ENCODE measurements at regions of chr11 and their contacts with region 1.

Region 1: DNA sequence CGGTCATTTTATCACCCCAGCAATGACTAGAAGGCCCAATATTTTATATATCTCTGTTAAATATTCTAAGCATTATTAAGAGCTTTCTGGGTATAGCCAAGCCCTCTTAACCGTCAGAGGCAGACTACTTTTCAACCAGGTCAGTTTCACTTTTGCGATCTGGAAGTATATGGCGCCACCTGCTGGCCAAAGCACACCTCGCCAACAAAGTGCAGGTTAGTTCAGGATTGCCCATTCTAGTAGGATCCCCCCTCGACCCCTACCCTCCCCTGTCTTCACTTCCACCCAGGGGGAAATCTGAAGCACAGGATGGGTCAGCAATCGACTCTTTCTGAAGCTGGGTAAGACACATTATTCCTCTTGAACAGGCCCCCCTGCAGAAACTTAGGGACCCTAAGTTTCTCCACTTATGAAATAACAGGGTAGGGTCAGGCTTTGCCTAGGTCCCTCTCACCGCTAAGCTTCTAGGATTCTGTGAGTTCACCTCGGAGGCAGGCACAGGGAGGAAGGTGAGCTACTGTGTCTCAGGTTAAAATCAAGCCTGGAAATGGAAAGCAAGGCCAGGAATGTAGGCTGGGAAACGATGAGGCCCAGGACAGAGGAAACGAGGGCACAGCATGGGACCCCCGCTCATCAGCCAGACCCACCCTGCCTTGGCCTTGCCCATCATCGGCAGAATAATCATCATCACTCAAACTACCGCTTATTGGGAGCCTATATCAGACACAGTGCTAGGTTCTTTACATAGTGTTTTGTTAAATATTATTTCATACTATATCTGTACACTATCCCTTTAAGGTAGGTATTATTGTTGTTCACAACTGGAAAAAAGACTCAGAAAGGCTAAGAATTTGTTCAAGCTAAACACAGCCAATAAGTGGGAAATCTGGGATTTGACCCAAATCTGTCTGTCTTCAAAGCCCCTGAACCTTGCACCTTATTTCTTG is 35.6 kb downstream of the KCNJ1 start:
- DNase-seq: peak; percentile 75
- ATAC-seq: peak; percentile 92
- H3K4me3 Mint-ChIP-seq: peak overlapping the region; percentile 70
- H3K27ac Mint-ChIP-seq: peak overlapping the region; percentile 91
- H3K4me1 Mint-ChIP-seq: peaks cover 80% of the 10 kb centered on the region
- H3K27me3 Mint-ChIP-seq: no peaks in the 10 kb centered on the region
- CTCF ChIP-seq: no peak

Region 2: DNA sequence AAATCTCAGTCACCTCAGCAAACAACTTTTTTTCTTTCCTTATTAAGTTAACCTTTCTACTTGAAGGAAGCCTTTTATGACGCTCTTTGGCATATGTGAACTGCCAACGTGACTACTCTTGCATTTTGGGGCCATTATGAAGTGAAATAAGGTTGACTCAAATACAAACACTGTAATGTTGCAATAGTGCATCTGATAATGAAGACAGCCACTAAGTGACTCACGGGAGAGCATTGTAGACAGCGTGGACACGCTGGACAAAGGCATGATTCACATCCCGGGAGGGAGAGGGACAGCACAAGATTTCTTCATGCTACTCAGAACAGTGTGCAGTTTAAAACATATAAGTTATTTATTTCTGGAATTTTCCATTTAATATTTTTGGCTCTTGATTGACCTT is 804.9 kb before region 1 on chr11:
- CTCF ChIA-PET with region 1: no interaction called
- POLR2A ChIA-PET with region 1: no interaction called
- intact Hi-C with region 1: loop called (anchors 1 kb)
- DNase-seq: no peak
- ATAC-seq: no peak
- H3K4me3 Mint-ChIP-seq: no peak overlapping the region
- H3K27ac Mint-ChIP-seq: no peak overlapping the region
- H3K4me1 Mint-ChIP-seq: no peaks in the 10 kb centered on the region
- H3K27me3 Mint-ChIP-seq: peaks cover 32% of the 10 kb centered on the region
- CTCF ChIP-seq: no peak

Region 3: GRCh38 chr11:128172046-128172878 is 659.2 kb before region 1 on chr11:
- CTCF ChIA-PET with region 1: interaction called, 70 read pairs
- POLR2A ChIA-PET with region 1: interaction called, 3 read pairs
- intact Hi-C with region 1: loop called (anchors 1 kb)
- DNase-seq: peak; percentile 65
- ATAC-seq: peak; percentile 79
- H3K4me3 Mint-ChIP-seq: no peak overlapping the region
- H3K27ac Mint-ChIP-seq: no peak overlapping the region
- H3K4me1 Mint-ChIP-seq: peaks cover 5% of the 10 kb centered on the region
- H3K27me3 Mint-ChIP-seq: no peaks in the 10 kb centered on the region
- CTCF ChIP-seq: no peak

Region 4: GRCh38 chr11:128497061-128497775 is 334.2 kb before region 1 on chr11:
- CTCF ChIA-PET with region 1: no interaction called
- POLR2A ChIA-PET with region 1: no interaction called
- intact Hi-C with region 1: no loop called
- DNase-seq: peak; percentile 43
- ATAC-seq: peak; percentile 92
- H3K4me3 Mint-ChIP-seq: peak overlapping the region; percentile 78
- H3K27ac Mint-ChIP-seq: peak overlapping the region; percentile 93
- H3K4me1 Mint-ChIP-seq: peaks cover 98% of the 10 kb centered on the region
- H3K27me3 Mint-ChIP-seq: no peaks in the 10 kb centered on the region
- CTCF ChIP-seq: no peak

Region 5: GRCh38 chr11:128552783-128553661 is 278.4 kb before region 1 on chr11:
- CTCF ChIA-PET with region 1: no interaction called
- POLR2A ChIA-PET with region 1: no interaction called
- intact Hi-C with region 1: loop called (anchors 2 kb)
- DNase-seq: peak; percentile 47
- ATAC-seq: peak; percentile 78
- H3K4me3 Mint-ChIP-seq: peak overlapping the region; percentile 73
- H3K27ac Mint-ChIP-seq: peak overlapping the region; percentile 98
- H3K4me1 Mint-ChIP-seq: peaks cover 72% of the 10 kb centered on the region
- H3K27me3 Mint-ChIP-seq: no peaks in the 10 kb centered on the region
- CTCF ChIP-seq: no peak

Region 6: DNA sequence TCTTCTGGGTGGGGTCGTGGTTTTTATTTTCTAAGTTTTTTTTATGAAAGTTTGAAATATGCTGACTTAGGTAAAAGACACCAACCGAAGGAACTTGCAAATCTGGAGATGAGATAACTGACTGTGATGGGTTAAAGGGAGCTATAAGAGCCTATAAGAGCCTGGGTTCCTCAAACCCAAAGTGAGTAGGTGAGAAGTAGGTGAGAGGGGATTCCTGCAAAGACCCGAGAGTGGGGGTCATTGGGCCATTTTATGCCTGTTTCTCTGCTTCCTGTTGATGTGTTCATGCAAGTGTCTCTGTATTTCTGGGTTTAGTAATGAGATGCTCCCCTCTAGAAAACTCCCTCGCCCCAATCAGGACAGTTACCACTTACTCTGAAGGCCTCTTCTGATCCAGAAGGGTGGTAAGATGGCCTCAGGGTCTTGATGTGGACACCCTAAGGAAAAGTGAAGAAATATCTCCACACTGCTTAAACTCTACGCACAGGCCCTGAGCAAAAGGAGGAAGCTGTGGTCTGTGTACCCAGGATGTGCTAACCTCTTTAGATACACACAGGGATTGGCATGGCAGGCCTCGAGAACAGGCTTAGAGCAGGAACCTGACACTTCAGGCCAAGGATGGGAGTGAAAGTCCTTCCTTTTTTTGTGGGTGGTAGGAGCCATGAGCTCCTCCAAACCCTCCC is 135.8 kb before region 1 on chr11:
- CTCF ChIA-PET with region 1: no interaction called
- POLR2A ChIA-PET with region 1: no interaction called
- intact Hi-C with region 1: loop called (anchors 2 kb)
- DNase-seq: no peak
- ATAC-seq: peak; percentile 52
- H3K4me3 Mint-ChIP-seq: peak overlapping the region; percentile 96
- H3K27ac Mint-ChIP-seq: peak overlapping the region; percentile 97
- H3K4me1 Mint-ChIP-seq: peaks cover 72% of the 10 kb centered on the region
- H3K27me3 Mint-ChIP-seq: peaks cover 1% of the 10 kb centered on the region
- CTCF ChIP-seq: no peak

Region 7: GRCh38 chr11:128796270-128796669 is 35.2 kb before region 1 on chr11:
- CTCF ChIA-PET with region 1: interaction called, 3 read pairs
- POLR2A ChIA-PET with region 1: interaction called, 3 read pairs
- intact Hi-C with region 1: loop called (anchors 5 kb)
- DNase-seq: no peak
- ATAC-seq: peak; percentile 89
- H3K4me3 Mint-ChIP-seq: peak overlapping the region; percentile 24
- H3K27ac Mint-ChIP-seq: peak overlapping the region; percentile 64
- H3K4me1 Mint-ChIP-seq: peaks cover 37% of the 10 kb centered on the region
- H3K27me3 Mint-ChIP-seq: no peaks in the 10 kb centered on the region
- CTCF ChIP-seq: no peak

Region 8: DNA sequence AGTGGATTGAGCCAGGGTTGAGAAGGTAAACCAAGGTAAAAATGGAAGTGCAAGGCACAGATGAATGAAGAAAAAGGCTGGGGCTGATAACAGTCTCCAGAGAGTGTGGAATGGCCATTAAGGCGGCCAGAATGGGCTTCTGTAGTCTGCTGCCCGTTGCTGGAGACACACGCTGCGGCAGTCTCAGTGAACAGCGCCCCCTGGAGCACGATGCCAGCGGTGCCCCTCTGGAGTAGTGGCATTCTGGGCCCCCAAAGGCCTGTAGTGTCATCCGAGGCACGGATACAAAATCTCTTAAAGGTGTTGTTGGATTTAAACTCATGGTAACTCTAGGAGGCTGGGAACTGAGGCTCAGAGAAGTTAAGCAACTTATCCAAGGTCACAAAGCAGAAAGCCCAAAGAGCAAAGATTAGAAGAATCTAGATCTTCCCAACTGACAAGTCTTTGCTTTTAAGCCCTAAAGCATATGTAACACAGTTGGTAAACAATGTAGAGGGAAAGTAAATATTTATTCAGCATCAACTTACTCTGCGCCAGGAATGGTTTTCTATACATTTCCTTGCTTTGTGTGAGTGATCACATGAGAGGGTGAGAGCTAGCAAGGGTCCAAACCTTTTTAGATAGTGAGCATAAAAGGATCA is 17.5 kb after region 1 on chr11:
- CTCF ChIA-PET with region 1: interaction called, 26 read pairs
- POLR2A ChIA-PET with region 1: interaction called, 10 read pairs
- intact Hi-C with region 1: loop called (anchors 2 kb)
- DNase-seq: peak; percentile 57
- ATAC-seq: peak; percentile 73
- H3K4me3 Mint-ChIP-seq: no peak overlapping the region
- H3K27ac Mint-ChIP-seq: peak overlapping the region; percentile 60
- H3K4me1 Mint-ChIP-seq: peaks cover 58% of the 10 kb centered on the region
- H3K27me3 Mint-ChIP-seq: no peaks in the 10 kb centered on the region
- CTCF ChIP-seq: peak; percentile 29

Measured in activated B cell treated with CpG ODN at 0.5 μM for 24 hours (primary cell).